Activated CD4-positive, alpha-beta T cell treated with anti-CD3 and anti-CD28 coated beads for 36 hours (primary cell): ENCODE measurements at regions of chr11 and their contacts with region 1.

Region 1: DNA sequence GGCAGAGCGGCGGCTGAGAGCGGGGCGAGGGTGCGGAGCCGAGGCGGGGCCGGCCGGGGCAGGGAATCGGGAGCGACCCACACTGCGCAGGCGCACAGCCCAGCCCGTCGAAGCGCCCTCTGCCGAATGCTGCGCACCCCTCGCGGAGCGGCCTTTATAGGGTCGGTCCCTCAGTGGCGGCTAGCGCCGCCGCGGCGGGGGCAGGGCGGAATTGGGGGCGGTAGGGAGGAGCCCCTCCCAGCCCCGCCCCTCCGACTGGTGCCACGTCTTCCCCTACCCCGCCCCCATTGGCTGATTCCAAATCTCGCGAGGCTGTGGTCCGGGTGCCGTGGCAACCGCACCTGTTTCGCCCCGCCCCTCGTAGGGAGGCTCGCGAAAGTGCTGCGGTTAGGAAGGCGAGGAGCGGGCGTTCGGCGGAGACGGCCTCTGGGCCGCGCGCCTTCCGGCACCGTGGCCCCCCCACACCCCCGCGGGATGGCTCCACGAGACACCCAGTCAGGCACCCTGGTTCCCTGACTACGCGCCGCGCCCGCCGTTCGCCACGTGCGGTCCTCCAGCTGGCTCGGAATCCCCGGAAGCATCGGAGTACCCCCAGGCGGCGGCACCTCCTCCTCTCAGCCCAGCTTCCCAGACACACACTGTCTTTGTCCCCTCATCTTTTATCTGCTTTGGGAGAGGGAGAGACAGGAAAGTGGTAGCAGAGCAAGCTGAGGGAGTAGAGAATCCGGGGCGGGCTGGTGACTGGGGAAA is at the start of gene EHD1:
- DNase-seq: peak; percentile 100
- ATAC-seq: peak; percentile 85
- H3K4me3 Mint-ChIP-seq: peak within 1 kb of the TSS; percentile 92
- H3K27ac Mint-ChIP-seq: peak within 1 kb of the TSS; percentile 97
- H3K4me1 Mint-ChIP-seq: peaks cover 60% of the 10 kb centered on the region
- H3K27me3 Mint-ChIP-seq: no peaks in the 10 kb centered on the region
- total RNA-seq, gene EHD1: 71.0 to 73.6 TPM

Region 2: GRCh38 chr11:64240394-64241174 is 638.1 kb before region 1 on chr11 and contains the start of gene FKBP2:
- CTCF ChIA-PET with region 1: no interaction called
- POLR2A ChIA-PET with region 1: no interaction called
- intact Hi-C with region 1: loop called in 1 of 2 experiments (anchors 2 kb)
- DNase-seq: peak; percentile 99
- ATAC-seq: peak; percentile 68
- H3K4me3 Mint-ChIP-seq: peak within 1 kb of the TSS; percentile 86
- H3K27ac Mint-ChIP-seq: peak within 1 kb of the TSS; percentile 99
- H3K4me1 Mint-ChIP-seq: peaks cover 31% of the 10 kb centered on the region
- H3K27me3 Mint-ChIP-seq: no peaks in the 10 kb centered on the region
- total RNA-seq, gene FKBP2: 19.9 to 21.3 TPM

Region 3: GRCh38 chr11:64846998-64847666 is 31.5 kb before region 1 on chr11:
- CTCF ChIA-PET with region 1: interaction called, 51 read pairs
- POLR2A ChIA-PET with region 1: interaction called, 8 read pairs
- intact Hi-C with region 1: loop called in 1 of 2 experiments (anchors 1 kb)
- DNase-seq: peak; percentile 96
- ATAC-seq: peak; percentile 75
- H3K4me3 Mint-ChIP-seq: no peak overlapping the region
- H3K27ac Mint-ChIP-seq: no peak overlapping the region
- H3K4me1 Mint-ChIP-seq: peaks cover 54% of the 10 kb centered on the region
- H3K27me3 Mint-ChIP-seq: no peaks in the 10 kb centered on the region

Region 4: GRCh38 chr11:64916775-64917662 is 38.4 kb after region 1 on chr11 and contains the start of gene ATG2A:
- CTCF ChIA-PET with region 1: no interaction called
- POLR2A ChIA-PET with region 1: no interaction called
- intact Hi-C with region 1: loop called in 1 of 2 experiments (anchors 1 kb)
- DNase-seq: peak; percentile 99
- ATAC-seq: peak; percentile 99
- H3K4me3 Mint-ChIP-seq: peak within 1 kb of the TSS; percentile 90
- H3K27ac Mint-ChIP-seq: peak within 1 kb of the TSS; percentile 88
- H3K4me1 Mint-ChIP-seq: peaks cover 16% of the 10 kb centered on the region
- H3K27me3 Mint-ChIP-seq: no peaks in the 10 kb centered on the region
- total RNA-seq, gene ATG2A: 15.8 to 16.7 TPM

Region 5: GRCh38 chr11:65027213-65028067 is 148.8 kb after region 1 on chr11 and contains the start of gene SNX15:
- CTCF ChIA-PET with region 1: no interaction called
- POLR2A ChIA-PET with region 1: no interaction called
- intact Hi-C with region 1: loop called in 1 of 2 experiments (anchors 1 kb)
- DNase-seq: peak; percentile 94
- ATAC-seq: peak; percentile 91
- H3K4me3 Mint-ChIP-seq: peak within 1 kb of the TSS; percentile 73
- H3K27ac Mint-ChIP-seq: peak within 1 kb of the TSS; percentile 86
- H3K4me1 Mint-ChIP-seq: peaks cover 21% of the 10 kb centered on the region
- H3K27me3 Mint-ChIP-seq: no peaks in the 10 kb centered on the region
- total RNA-seq, gene SNX15: 12.1 to 14.2 TPM

Region 6: DNA sequence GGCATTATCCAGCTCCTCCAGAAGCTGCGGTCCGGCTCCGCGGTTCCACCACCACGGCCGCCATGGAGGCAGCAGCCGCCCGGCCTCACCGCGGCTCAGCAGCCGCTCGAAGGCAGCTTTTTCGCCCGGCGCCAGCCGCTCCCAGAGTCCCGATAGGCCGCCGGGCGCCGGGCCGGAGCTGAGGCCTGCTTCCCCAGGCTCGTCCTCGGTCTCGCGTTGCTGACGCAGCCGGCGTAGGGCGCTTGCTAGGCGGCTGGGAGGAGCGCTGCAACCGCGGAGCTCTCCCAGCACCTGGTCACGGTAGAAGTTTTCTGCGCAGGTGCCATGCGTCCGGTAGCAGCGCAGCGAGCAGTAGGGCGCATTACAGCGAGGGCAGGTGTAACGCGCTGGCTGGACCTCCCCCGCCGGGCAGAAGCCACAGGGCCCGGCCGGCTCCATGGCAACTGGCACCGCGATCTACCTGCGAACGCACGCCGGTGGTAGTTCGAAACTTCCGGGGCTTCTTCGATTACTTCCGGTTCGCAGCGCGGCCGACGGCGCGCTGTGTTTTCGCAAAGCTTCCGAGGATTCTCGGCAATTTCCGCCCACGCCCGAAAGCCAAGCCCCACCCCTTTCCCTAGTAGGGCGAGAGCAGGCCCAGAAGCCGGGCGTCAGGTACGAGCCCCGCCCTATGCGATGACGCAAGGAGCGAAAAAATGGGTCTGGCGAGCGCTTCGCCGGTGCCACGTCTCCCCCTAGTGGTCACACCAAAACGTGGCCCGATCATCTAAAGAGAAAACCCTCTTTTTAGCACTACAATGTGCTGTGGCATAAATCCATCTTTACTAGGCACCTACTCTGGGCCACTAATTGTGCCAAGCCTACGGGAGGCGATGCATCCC is 238.8 kb after region 1 on chr11 and contains the start of gene ZNHIT2:
- CTCF ChIA-PET with region 1: no interaction called
- POLR2A ChIA-PET with region 1: interaction called, 3 read pairs
- intact Hi-C with region 1: loop called in 1 of 2 experiments (anchors 1 kb)
- DNase-seq: peak; percentile 100
- ATAC-seq: peak; percentile 68
- H3K4me3 Mint-ChIP-seq: peak within 1 kb of the TSS; percentile 88
- H3K27ac Mint-ChIP-seq: peak within 1 kb of the TSS; percentile 95
- H3K4me1 Mint-ChIP-seq: peaks cover 57% of the 10 kb centered on the region
- H3K27me3 Mint-ChIP-seq: no peaks in the 10 kb centered on the region
- total RNA-seq, gene ZNHIT2: 7.1 to 9.7 TPM

Region 7: GRCh38 chr11:65334696-65335295 is 456.1 kb after region 1 on chr11:
- CTCF ChIA-PET with region 1: no interaction called
- POLR2A ChIA-PET with region 1: no interaction called
- intact Hi-C with region 1: no loop called
- DNase-seq: no peak
- ATAC-seq: no peak
- H3K4me3 Mint-ChIP-seq: peak overlapping the region; percentile 81
- H3K27ac Mint-ChIP-seq: peak overlapping the region; percentile 87
- H3K4me1 Mint-ChIP-seq: peaks cover 34% of the 10 kb centered on the region
- H3K27me3 Mint-ChIP-seq: no peaks in the 10 kb centered on the region